Activated CD4-positive, alpha-beta memory T cell treated with anti-CD3 and anti-CD28 coated beads for 36 hours (primary cell): ENCODE measurements at regions of chr2 and their contacts with region 1.

Region 1: GRCh38 chr2:200713003-200713703 is 98.6 kb upstream of the BZW1 start:
- DNase-seq: peak; percentile 96
- H3K4me3 Mint-ChIP-seq: peak overlapping the region; percentile 66
- H3K27ac Mint-ChIP-seq: peak overlapping the region; percentile 100
- H3K4me1 Mint-ChIP-seq: peaks cover 33% of the 10 kb centered on the region
- H3K27me3 Mint-ChIP-seq: peaks cover 5% of the 10 kb centered on the region

Region 2: GRCh38 chr2:200578778-200579177 is 134.4 kb before region 1 on chr2:
- CTCF ChIA-PET with region 1: interaction called, 4 read pairs
- POLR2A ChIA-PET with region 1: no interaction called
- intact Hi-C with region 1: loop called (anchors 1 kb)
- DNase-seq: no peak
- H3K4me3 Mint-ChIP-seq: no peak overlapping the region
- H3K27ac Mint-ChIP-seq: no peak overlapping the region
- H3K4me1 Mint-ChIP-seq: peaks cover 12% of the 10 kb centered on the region
- H3K27me3 Mint-ChIP-seq: no peaks in the 10 kb centered on the region

Region 3: GRCh38 chr2:200765139-200765951 is 52.2 kb after region 1 on chr2:
- CTCF ChIA-PET with region 1: interaction called, 23 read pairs
- POLR2A ChIA-PET with region 1: interaction called, 17 read pairs
- intact Hi-C with region 1: loop called (anchors 1 kb)
- DNase-seq: peak; percentile 75
- H3K4me3 Mint-ChIP-seq: peak overlapping the region; percentile 42
- H3K27ac Mint-ChIP-seq: peak overlapping the region; percentile 96
- H3K4me1 Mint-ChIP-seq: peaks cover 32% of the 10 kb centered on the region
- H3K27me3 Mint-ChIP-seq: no peaks in the 10 kb centered on the region

Region 4: GRCh38 chr2:200864176-200864976 is 151.2 kb after region 1 on chr2 and contains the start of gene CLK1:
- CTCF ChIA-PET with region 1: interaction called, 5 read pairs
- POLR2A ChIA-PET with region 1: interaction called, 14 read pairs
- intact Hi-C with region 1: loop called (anchors 1 kb)
- DNase-seq: peak; percentile 98
- H3K4me3 Mint-ChIP-seq: peak within 1 kb of the TSS; percentile 87
- H3K27ac Mint-ChIP-seq: peak within 1 kb of the TSS; percentile 100
- H3K4me1 Mint-ChIP-seq: peaks cover 36% of the 10 kb centered on the region
- H3K27me3 Mint-ChIP-seq: no peaks in the 10 kb centered on the region
- total RNA-seq, gene CLK1: 112 to 114 TPM

Region 5: DNA sequence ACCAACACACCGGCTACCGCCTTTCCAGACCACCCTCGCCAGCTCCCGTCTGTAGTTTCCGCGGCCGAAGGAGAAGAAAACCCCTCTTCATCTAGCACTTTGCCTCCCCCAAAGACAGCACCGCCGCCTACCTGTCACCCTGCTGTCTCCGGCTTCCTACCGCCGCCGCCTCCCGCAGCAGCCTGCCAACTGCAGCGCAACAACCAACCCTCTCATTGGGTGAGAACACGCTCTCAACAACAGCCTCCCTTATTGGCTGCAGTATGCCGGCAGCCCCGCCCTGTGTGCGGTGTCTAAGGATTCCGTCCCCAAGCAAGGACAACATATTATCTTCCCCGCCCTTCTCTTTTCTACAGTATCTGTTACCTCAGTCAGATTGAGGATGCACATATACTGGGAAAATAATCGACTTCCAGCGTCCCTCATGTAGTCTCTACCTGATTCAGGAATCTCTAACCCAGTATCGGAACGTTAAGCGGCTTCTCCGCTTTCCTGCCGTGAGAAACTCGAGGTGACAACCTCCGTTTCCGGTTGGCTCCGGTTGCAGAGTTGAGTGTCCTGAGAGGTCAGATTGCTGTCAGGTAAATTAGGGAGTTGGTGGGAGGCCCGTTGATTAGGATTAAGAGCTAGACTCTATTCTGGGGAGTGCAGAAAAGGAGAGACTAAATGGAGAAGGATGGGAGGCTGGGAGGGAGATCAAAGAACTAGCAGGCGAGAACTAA is 358.5 kb after region 1 on chr2 and contains the starts of genes HYCC2 and NDUFB3:
- CTCF ChIA-PET with region 1: interaction called, 3 read pairs
- POLR2A ChIA-PET with region 1: interaction called, 3 read pairs
- intact Hi-C with region 1: loop called (anchors 2 kb)
- DNase-seq: peak; percentile 95
- H3K4me3 Mint-ChIP-seq: peak within 1 kb of the TSS; percentile 91
- H3K27ac Mint-ChIP-seq: peak within 1 kb of the TSS; percentile 86
- H3K4me1 Mint-ChIP-seq: peaks cover 52% of the 10 kb centered on the region
- H3K27me3 Mint-ChIP-seq: no peaks in the 10 kb centered on the region
- total RNA-seq, gene HYCC2: 18.9 to 20.5 TPM
- total RNA-seq, gene NDUFB3: 158 to 162 TPM

Region 6: DNA sequence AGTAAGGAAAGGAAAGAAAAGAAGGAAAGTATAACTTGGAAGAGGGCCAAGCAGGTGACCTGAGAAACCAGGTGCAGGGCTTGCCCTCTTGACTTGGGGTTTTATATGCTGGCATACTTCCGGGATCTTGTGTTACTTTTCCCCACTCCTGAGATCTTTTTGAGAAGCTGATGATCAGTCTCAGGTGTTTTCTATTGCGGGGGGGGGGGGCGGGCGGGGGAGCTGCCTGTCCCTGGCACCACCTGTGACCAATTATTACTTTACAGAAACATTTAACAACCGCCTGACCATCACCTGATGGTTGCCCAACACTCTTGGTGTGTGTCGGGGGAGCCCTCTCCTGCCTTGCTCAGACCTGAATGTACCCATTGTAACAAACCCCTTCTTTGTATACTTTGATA is 462.9 kb after region 1 on chr2:
- CTCF ChIA-PET with region 1: no interaction called
- POLR2A ChIA-PET with region 1: no interaction called
- intact Hi-C with region 1: loop called (anchors 2 kb)
- DNase-seq: no peak
- H3K4me3 Mint-ChIP-seq: no peak overlapping the region
- H3K27ac Mint-ChIP-seq: no peak overlapping the region
- H3K4me1 Mint-ChIP-seq: peaks cover 16% of the 10 kb centered on the region
- H3K27me3 Mint-ChIP-seq: no peaks in the 10 kb centered on the region